Mammary epithelial cell (primary cell): ENCODE measurements at regions of chr16 and their contacts with region 1.

Region 1: DNA sequence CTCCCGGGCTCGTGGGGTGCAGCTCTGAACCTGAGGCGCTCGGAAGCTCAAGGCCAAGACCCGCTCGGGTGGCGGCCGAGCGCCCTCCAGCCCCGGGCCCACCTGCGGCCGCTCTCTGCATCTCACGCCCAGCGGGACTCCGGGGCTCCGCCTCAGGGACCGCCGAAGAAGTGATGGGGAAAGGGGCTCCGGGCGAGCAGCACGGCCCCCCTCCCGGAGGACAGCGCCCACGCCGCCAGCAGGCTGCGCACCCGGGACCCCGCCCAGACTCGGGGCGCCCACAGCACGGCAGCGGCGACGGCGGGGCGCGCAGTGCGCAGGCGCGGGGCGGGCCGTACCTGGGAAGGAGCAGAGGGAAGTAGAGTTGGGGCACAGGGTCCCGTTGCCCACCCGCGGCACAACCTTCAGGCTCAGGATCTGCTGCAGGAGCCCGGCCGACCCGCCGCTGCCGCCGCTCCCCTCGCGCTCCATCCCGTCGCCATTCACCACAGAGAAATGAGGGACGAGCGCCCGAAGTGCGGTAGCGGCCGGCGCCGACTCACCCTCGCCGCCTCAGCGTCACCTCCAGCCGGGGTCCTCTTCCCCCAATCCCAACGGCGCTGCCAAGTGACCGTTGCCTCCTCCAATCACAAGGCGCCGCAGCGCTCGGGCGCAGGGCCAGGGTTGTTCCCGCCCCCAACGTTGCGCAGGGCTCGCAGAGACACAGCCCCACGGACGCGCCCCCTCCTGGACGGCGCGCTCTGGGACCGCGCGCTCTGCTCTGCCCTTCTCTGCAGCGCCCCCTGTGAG is at the start of gene TMEM170A:
- DNase-seq: peak; percentile 99
- H3K4me3 ChIP-seq: peak within 1 kb of the TSS; percentile 89 to 93 (median 90)
- H3K27ac ChIP-seq: peak within 1 kb of the TSS; percentile 81
- H3K4me1 ChIP-seq: peaks cover 12% of the 10 kb centered on the region
- H3K27me3 ChIP-seq: no peaks in the 10 kb centered on the region
- CTCF ChIP-seq: peak; percentile 99 to 100
- total RNA-seq, gene TMEM170A: 12.5 to 15.6 TPM

Region 2: GRCh38 chr16:75238132-75238852 is 226.0 kb before region 1 on chr16:
- CTCF ChIA-PET with region 1: no interaction called
- dilution Hi-C with region 1: no loop called
- in situ Hi-C with region 1: no loop called
- intact Hi-C with region 1: no loop called
- DNase-seq: no peak
- H3K4me3 ChIP-seq: no peak overlapping the region
- H3K27ac ChIP-seq: peak overlapping the region; percentile 10
- H3K4me1 ChIP-seq: peaks cover 57% of the 10 kb centered on the region
- H3K27me3 ChIP-seq: no peaks in the 10 kb centered on the region
- CTCF ChIP-seq: no peak

Region 3: DNA sequence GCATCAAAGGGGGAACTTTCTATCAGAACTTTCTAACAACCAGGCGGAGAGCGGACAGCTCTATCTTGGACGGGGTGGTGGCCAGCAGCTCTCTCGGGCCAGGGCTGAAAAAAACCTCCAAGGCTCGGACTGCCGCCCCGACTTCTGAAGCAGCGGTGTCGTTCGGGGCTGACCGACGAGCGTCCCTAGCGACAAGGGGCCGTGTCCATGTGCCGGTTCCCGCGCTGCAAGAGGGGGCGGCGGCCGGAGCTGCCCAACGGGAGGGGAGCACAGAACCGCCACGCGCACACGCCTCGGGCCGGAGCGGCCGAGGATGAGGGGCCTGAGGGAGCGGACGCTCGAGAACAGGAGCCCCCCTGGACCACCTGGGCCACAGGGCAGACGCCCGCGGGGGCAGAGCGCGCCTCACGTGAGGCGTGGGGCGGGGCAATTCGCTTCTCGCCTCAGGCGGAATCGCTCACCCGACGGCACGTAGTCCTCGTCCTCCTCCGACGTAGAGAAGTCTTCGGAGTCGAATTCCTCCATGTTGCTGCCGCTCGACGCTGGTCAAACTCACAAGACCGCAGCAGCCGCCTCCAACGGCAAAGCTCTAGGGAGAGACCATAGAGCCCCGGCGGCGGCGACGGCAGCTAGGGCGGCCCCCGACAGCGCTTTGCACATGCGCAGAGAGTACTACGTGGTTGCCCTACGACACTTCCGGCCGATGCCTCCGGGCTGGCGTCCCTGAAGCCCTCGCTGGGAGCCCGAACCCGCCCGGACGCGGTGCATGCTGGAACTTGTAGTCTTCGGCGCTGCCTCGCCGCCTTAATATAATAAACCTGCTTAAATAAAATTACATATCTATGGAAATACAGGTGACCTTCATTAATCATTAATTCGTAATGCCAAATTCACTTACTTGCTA is 31.2 kb before region 1 on chr16 and contains the start of gene CFDP1:
- CTCF ChIA-PET with region 1: no interaction called
- dilution Hi-C with region 1: no loop called
- in situ Hi-C with region 1: no loop called
- intact Hi-C with region 1: loop called (anchors 2 kb)
- DNase-seq: peak; percentile 90
- H3K4me3 ChIP-seq: peak within 1 kb of the TSS; percentile 89 to 98 (median 89)
- H3K27ac ChIP-seq: peak within 1 kb of the TSS; percentile 96
- H3K4me1 ChIP-seq: peaks cover 7% of the 10 kb centered on the region
- H3K27me3 ChIP-seq: no peaks in the 10 kb centered on the region
- CTCF ChIP-seq: no peak
- total RNA-seq, gene CFDP1: 18.0 to 35.9 TPM

Region 4: GRCh38 chr16:75486676-75487313 is 22.5 kb after region 1 on chr16:
- CTCF ChIA-PET with region 1: interaction called, 9 read pairs
- dilution Hi-C with region 1: no loop called
- in situ Hi-C with region 1: no loop called
- intact Hi-C with region 1: loop called (anchors 1 kb)
- DNase-seq: peak; percentile 32
- H3K4me3 ChIP-seq: no peak overlapping the region
- H3K27ac ChIP-seq: no peak overlapping the region
- H3K4me1 ChIP-seq: peaks cover 45% of the 10 kb centered on the region
- H3K27me3 ChIP-seq: no peaks in the 10 kb centered on the region
- CTCF ChIP-seq: no peak

Region 5: GRCh38 chr16:75506567-75506966 is 42.2 kb after region 1 on chr16:
- CTCF ChIA-PET with region 1: no interaction called
- dilution Hi-C with region 1: loop called (anchors 5 kb)
- in situ Hi-C with region 1: no loop called
- intact Hi-C with region 1: no loop called
- DNase-seq: peak; percentile 93
- H3K4me3 ChIP-seq: no peak overlapping the region
- H3K27ac ChIP-seq: peak overlapping the region; percentile 86
- H3K4me1 ChIP-seq: peaks cover 39% of the 10 kb centered on the region
- H3K27me3 ChIP-seq: no peaks in the 10 kb centered on the region
- CTCF ChIP-seq: no peak